ENCODE measurements at regions of chr9 and their contacts with region 1.

Region 1: GRCh38 chr9:134434894-134435506 is 108.7 kb downstream of the RXRA start:
- DNase-seq: peak; percentile 97
- H3K4me3 ChIP-seq: no peak overlapping the region
- H3K27ac ChIP-seq: peak overlapping the region; percentile 94 to 96
- H3K4me1 ChIP-seq: peaks cover 49% of the 10 kb centered on the region
- H3K27me3 ChIP-seq: no peaks in the 10 kb centered on the region
- CTCF ChIP-seq: no peak
- POLR2A ChIP-seq: peak; percentile 24

Region 2: GRCh38 chr9:134378901-134379338 is 56.1 kb before region 1 on chr9:
- intact Hi-C with region 1: loop called (anchors 5 kb)
- DNase-seq: peak; percentile 94
- H3K4me3 ChIP-seq: no peak overlapping the region
- H3K27ac ChIP-seq: peak overlapping the region; percentile 87 to 95
- H3K4me1 ChIP-seq: peaks cover 73% of the 10 kb centered on the region
- H3K27me3 ChIP-seq: no peaks in the 10 kb centered on the region
- CTCF ChIP-seq: peak in 2 of 4 experiments; percentile 3 to 6
- POLR2A ChIP-seq: peak; percentile 63

Region 3: GRCh38 chr9:134624827-134625181 is 189.8 kb after region 1 on chr9:
- intact Hi-C with region 1: no loop called
- DNase-seq: no peak
- H3K4me3 ChIP-seq: no peak overlapping the region
- H3K27ac ChIP-seq: no peak overlapping the region
- H3K4me1 ChIP-seq: no peaks in the 10 kb centered on the region
- H3K27me3 ChIP-seq: no peaks in the 10 kb centered on the region
- CTCF ChIP-seq: no peak
- POLR2A ChIP-seq: no peak